Activated CD4-positive, alpha-beta memory T cell treated with anti-CD3 and anti-CD28 coated beads for 36 hours (primary cell): ENCODE measurements at regions of chr17 and their contacts with region 1.

Region 1: GRCh38 chr17:46193626-46194392 is 580 bp upstream of the KANSL1 start:
- DNase-seq: peak; percentile 96
- H3K4me3 Mint-ChIP-seq: peak overlapping the region; percentile 83
- H3K27ac Mint-ChIP-seq: peak overlapping the region; percentile 89
- H3K4me1 Mint-ChIP-seq: peaks cover 56% of the 10 kb centered on the region
- H3K27me3 Mint-ChIP-seq: no peaks in the 10 kb centered on the region

Region 2: DNA sequence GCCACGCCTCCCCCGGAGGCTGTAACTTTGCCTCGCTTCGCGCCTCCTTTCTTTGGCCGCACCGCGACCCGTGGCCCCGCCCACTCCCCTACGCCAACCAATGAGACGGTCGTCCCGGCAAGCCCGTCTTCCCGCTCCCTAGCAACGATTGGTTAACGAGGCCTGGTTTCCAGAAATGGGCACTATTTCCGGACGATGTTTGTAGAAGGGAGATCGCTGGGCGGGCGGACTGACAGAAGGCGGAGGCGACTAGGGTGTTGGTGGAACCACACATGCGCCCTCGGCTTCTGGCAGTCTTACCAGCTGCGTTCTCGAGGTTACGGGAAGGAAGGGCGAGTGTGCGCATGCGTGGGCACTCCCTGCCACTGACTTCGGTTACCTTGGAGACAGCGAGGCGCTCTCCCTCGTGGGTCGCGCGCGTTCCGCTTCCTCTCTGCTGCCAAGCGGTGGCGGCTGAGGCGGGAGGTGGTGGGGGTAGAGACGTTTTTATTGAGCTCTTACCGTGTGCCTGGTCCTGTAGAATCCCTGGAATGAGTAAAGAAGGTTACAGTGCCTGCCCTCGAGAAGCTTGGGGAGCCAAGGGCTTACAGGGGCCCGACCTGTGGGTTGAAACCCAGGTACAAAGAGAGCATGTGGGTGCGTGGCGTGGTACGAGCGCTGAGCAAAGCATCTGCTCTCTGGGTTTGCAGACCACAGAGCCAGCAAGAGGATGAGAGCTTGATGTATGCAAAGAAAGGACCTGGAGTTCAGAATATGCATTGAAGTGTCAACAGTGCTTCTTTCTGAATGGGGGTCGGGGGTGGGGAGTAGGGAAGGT is 876.5 kb before region 1 on chr17:
- CTCF ChIA-PET with region 1: no interaction called
- POLR2A ChIA-PET with region 1: no interaction called
- intact Hi-C with region 1: loop called (anchors 5 kb)
- DNase-seq: peak; percentile 100
- H3K4me3 Mint-ChIP-seq: peak overlapping the region; percentile 81
- H3K27ac Mint-ChIP-seq: peak overlapping the region; percentile 89
- H3K4me1 Mint-ChIP-seq: peaks cover 65% of the 10 kb centered on the region
- H3K27me3 Mint-ChIP-seq: no peaks in the 10 kb centered on the region

Region 3: GRCh38 chr17:46002311-46002972 is 191.4 kb before region 1 on chr17:
- CTCF ChIA-PET with region 1: interaction called, 10 read pairs
- POLR2A ChIA-PET with region 1: interaction called, 3 read pairs
- intact Hi-C with region 1: loop called (anchors 5 kb)
- DNase-seq: peak; percentile 82
- H3K4me3 Mint-ChIP-seq: no peak overlapping the region
- H3K27ac Mint-ChIP-seq: no peak overlapping the region
- H3K4me1 Mint-ChIP-seq: no peaks in the 10 kb centered on the region
- H3K27me3 Mint-ChIP-seq: no peaks in the 10 kb centered on the region

Region 4: DNA sequence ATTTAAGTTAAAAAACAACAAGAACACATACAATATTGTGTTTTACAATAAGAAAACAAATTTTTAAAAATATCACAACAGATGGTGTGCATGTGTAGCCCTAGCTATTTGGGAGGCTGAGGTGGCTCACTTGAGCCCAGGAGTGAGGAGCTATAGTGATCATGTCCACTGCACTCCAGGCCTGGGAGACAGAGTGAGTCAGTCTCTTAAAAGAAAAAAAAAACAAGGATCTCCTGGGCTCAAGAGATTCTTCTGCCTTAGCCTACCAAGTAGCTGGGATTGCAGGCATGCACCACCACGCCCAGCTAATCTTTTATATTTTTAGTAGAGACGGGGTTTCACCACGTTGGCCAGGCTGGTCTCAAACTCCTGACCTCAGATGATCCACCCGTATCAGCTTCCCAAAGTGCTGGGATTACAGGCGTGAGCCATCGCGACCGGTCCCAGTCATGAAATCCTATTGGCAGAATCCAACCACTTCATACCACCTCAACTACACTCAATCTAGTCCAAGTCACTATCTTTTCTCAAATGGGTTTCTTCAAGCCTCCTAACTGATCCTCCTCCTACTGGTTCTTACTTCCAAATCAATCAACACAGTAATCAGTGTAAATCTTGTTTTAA is 139.8 kb before region 1 on chr17:
- CTCF ChIA-PET with region 1: interaction called, 22 read pairs
- POLR2A ChIA-PET with region 1: interaction called, 3 read pairs
- intact Hi-C with region 1: loop called (anchors 2 kb)
- DNase-seq: no peak
- H3K4me3 Mint-ChIP-seq: no peak overlapping the region
- H3K27ac Mint-ChIP-seq: no peak overlapping the region
- H3K4me1 Mint-ChIP-seq: peaks cover 52% of the 10 kb centered on the region
- H3K27me3 Mint-ChIP-seq: no peaks in the 10 kb centered on the region

Region 5: GRCh38 chr17:46139432-46140210 is 54.2 kb before region 1 on chr17:
- CTCF ChIA-PET with region 1: interaction called, 28 read pairs
- POLR2A ChIA-PET with region 1: interaction called, 6 read pairs
- intact Hi-C with region 1: loop called (anchors 5 kb)
- DNase-seq: no peak
- H3K4me3 Mint-ChIP-seq: no peak overlapping the region
- H3K27ac Mint-ChIP-seq: no peak overlapping the region
- H3K4me1 Mint-ChIP-seq: peaks cover 92% of the 10 kb centered on the region
- H3K27me3 Mint-ChIP-seq: no peaks in the 10 kb centered on the region

Region 6: GRCh38 chr17:46159686-46160085 is 34.1 kb before region 1 on chr17:
- CTCF ChIA-PET with region 1: interaction called, 50 read pairs
- POLR2A ChIA-PET with region 1: interaction called, 4 read pairs
- intact Hi-C with region 1: loop called (anchors 1 kb)
- DNase-seq: no peak
- H3K4me3 Mint-ChIP-seq: no peak overlapping the region
- H3K27ac Mint-ChIP-seq: no peak overlapping the region
- H3K4me1 Mint-ChIP-seq: peaks cover 88% of the 10 kb centered on the region
- H3K27me3 Mint-ChIP-seq: no peaks in the 10 kb centered on the region

Region 7: DNA sequence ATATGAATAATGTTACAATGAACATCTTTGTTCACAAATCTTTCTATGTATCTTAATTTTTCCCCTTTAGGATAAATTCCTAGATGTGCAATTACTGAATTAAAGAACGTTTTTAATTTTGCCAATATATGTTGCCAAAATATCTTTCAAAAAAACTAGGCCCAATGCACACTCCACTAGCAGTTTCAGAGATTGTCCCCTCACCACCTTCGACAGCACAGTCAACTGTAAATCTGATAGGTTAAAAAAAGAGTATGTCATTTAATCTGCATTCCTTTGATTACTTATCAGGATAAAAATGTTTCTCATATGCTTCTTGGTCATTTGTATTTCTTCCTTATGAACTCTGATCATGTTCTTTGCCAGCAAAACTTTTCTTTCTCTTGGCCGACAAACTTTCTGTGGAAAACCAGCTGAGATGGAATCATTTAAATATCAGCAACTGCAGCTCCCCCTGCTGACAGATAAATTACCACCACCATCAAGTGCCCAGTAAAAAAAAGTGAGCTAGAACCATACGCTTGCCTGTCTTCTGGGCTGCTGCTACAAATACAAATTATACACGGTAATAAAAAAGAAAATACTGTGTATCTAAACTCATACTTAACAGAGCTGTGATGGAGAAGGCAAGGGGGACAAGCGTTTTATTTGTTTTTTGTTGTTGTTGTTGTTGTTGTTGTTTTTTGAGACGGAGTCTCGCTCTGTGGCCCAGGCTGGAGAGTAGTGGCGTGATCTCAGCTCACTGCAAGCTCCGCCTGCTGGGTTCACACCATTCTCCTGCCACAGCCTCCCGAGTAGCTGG is 19.0 kb after region 1 on chr17:
- CTCF ChIA-PET with region 1: interaction called, 35 read pairs
- POLR2A ChIA-PET with region 1: interaction called, 4 read pairs
- intact Hi-C with region 1: loop called (anchors 1 kb)
- DNase-seq: peak; percentile 67
- H3K4me3 Mint-ChIP-seq: no peak overlapping the region
- H3K27ac Mint-ChIP-seq: no peak overlapping the region
- H3K4me1 Mint-ChIP-seq: peaks cover 21% of the 10 kb centered on the region
- H3K27me3 Mint-ChIP-seq: no peaks in the 10 kb centered on the region

Region 8: GRCh38 chr17:46274238-46274637 is 80.4 kb after region 1 on chr17:
- CTCF ChIA-PET with region 1: no interaction called
- POLR2A ChIA-PET with region 1: no interaction called
- intact Hi-C with region 1: no loop called
- DNase-seq: no peak
- H3K4me3 Mint-ChIP-seq: no peak overlapping the region
- H3K27ac Mint-ChIP-seq: no peak overlapping the region
- H3K4me1 Mint-ChIP-seq: no peaks in the 10 kb centered on the region
- H3K27me3 Mint-ChIP-seq: peaks cover 2% of the 10 kb centered on the region